Gastrocnemius medialis (tissue), 4 donors: ENCODE measurements at regions of chr6 and their contacts with region 1.

Region 1: DNA sequence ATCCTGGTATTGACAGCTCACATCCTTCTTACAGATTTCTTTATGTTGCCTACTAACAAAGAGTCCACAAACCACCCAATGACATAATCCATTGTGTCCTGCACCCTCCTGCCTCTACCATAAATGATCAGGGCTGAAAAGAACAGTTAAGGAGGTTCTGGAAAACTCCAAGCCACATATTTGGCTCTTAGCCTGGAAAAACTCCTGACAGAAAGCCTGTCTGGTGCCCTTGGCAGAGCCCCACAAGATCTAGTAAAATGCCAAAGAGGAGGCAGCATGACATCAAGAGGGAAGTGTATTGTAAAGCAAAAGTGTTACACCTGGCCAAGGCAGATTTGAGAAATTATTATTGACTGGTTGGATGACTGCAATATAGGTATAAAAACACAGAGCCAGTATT is 126.4 kb upstream of the VGLL2 start:
- DNase-seq: peak; percentile 74 to 76
- ATAC-seq: peak; percentile 65 to 73
- H3K4me3 ChIP-seq: no peak overlapping the region
- H3K27ac ChIP-seq: peak overlapping the region; percentile 88 to 94 (median 92)
- H3K4me1 ChIP-seq: peaks cover 27 to 36% of the 10 kb centered on the region in 2 donors
- H3K27me3 ChIP-seq: no peaks in the 10 kb centered on the region
- CTCF ChIP-seq: no peak
- POLR2A ChIP-seq: no peak

Region 2: GRCh38 chr6:116975600-116975999 is 163.3 kb before region 1 on chr6:
- in situ Hi-C with region 1: loop called in 1 of 4 experiments (anchors 10 kb)
- intact Hi-C with region 1: loop called (anchors 1 kb)
- DNase-seq: peak; percentile 65 to 68
- ATAC-seq: peak; percentile 86 to 94
- H3K4me3 ChIP-seq: no peak overlapping the region
- H3K27ac ChIP-seq: peak overlapping the region; percentile 78 to 91 (median 88)
- H3K4me1 ChIP-seq: peaks cover 27 to 30% of the 10 kb centered on the region in 2 donors
- H3K27me3 ChIP-seq: no peaks in the 10 kb centered on the region
- CTCF ChIP-seq: no peak
- POLR2A ChIP-seq: peak; percentile 39 to 66

Region 3: GRCh38 chr6:117008618-117009017 is 130.3 kb before region 1 on chr6:
- in situ Hi-C with region 1: no loop called
- intact Hi-C with region 1: no loop called
- DNase-seq: no peak
- ATAC-seq: no peak
- H3K4me3 ChIP-seq: no peak overlapping the region
- H3K27ac ChIP-seq: no peak overlapping the region
- H3K4me1 ChIP-seq: no peaks in the 10 kb centered on the region
- H3K27me3 ChIP-seq: no peaks in the 10 kb centered on the region
- CTCF ChIP-seq: no peak
- POLR2A ChIP-seq: no peak

Region 4: DNA sequence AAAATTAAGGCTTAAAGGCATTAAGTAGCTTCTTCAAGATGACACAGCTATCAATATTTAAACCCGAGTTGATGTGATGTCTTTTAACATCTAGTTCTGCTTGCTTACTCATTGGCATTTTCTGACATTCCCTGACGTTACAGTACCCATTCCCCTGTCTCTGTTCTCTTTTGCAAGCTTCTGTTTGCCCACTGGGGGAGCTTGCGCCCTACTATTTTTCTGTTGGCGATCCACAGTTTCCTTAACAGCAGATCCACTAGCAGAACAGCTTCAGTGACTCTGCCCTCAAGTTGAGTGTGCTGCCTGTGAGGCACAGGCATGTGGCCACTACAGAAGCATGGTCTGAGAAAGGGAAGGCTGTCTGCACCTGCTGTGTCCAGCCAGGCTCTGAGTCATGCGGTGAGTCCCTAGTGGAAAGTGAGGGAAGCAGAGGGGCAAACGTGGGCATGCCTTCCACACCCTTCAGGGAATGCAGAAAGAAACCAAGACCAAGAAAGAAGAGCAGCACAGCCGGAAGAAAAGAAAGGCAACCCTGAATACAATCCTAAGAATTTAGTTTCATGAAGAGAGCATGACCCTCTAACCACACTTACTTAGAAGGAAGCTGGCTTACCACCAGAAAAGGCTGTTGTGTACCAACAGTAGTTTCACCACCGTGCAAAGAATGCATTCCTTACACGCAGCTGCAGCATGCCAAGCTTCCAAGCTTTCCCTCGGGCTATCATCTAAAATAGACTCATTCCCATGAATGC is 28.8 kb after region 1 on chr6:
- in situ Hi-C with region 1: no loop called
- intact Hi-C with region 1: loop called (anchors 2 kb)
- DNase-seq: peak; percentile 32 to 63
- ATAC-seq: peak; percentile 80 to 94
- H3K4me3 ChIP-seq: no peak overlapping the region
- H3K27ac ChIP-seq: peak overlapping the region; percentile 25 to 76 (median 55)
- H3K4me1 ChIP-seq: peaks cover 17 to 23% of the 10 kb centered on the region in 2 donors
- H3K27me3 ChIP-seq: no peaks in the 10 kb centered on the region
- CTCF ChIP-seq: peak in 1 of 5 experiments; percentile 18
- POLR2A ChIP-seq: no peak

Region 5: GRCh38 chr6:117200067-117200466 is 61.1 kb after region 1 on chr6:
- in situ Hi-C with region 1: no loop called
- intact Hi-C with region 1: no loop called
- DNase-seq: peak; percentile 41 to 45
- ATAC-seq: peak; percentile 84 to 90
- H3K4me3 ChIP-seq: no peak overlapping the region
- H3K27ac ChIP-seq: peak overlapping the region in 3 of 4 donors; percentile 11 to 71 (median 54)
- H3K4me1 ChIP-seq: peaks cover 5 to 18% of the 10 kb centered on the region in 2 donors
- H3K27me3 ChIP-seq: no peaks in the 10 kb centered on the region
- CTCF ChIP-seq: no peak
- POLR2A ChIP-seq: no peak

Region 6: DNA sequence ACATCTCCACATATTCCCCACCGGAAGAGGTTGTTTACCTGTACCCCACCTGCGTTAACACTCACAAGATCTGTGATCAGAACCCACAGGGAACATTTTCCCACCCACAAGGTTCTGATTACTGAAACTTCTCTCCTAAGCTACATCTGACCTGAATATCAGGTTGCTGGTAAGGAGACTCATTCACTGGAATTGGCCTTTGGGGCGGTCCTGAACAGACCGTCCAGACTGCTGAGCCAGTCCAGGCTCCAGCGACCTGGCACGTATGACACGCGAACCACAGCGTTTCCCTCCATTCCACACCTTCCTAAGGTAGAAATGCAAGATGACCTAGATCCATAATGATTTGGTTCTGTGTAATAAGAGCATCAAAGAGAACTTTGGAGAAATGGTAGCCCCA is 136.3 kb after region 1 on chr6:
- in situ Hi-C with region 1: no loop called
- intact Hi-C with region 1: loop called (anchors 2 kb)
- DNase-seq: peak; percentile 66 to 78
- ATAC-seq: peak; percentile 78 to 83
- H3K4me3 ChIP-seq: peak overlapping the region in 3 of 4 donors; percentile 1 to 27 (median 17)
- H3K27ac ChIP-seq: peak overlapping the region; percentile 90 to 99 (median 97)
- H3K4me1 ChIP-seq: peaks cover 33 to 48% of the 10 kb centered on the region in 2 donors
- H3K27me3 ChIP-seq: no peaks in the 10 kb centered on the region
- CTCF ChIP-seq: no peak
- POLR2A ChIP-seq: peak; percentile 52 to 73

Region 7: DNA sequence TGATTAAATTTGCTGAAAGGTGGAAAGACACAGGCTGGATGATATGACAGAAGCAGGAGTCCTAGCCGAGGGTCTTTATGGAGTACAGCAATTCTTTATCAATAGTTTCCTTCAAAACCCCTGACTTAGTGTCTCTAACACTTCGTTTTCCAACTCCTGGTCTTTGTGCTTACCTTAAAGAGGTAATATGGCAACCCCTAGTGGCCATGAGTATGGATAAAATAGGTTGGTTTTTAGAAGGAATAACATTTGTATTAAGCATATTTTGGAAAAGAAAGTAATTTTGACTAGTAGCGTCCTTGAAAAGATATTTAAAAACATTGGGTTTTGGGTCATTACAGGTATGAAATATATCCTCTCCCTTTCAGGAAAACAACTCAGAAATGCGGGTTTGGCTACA is 178.3 kb after region 1 on chr6:
- in situ Hi-C with region 1: no loop called
- intact Hi-C with region 1: loop called (anchors 5 kb)
- DNase-seq: no peak
- ATAC-seq: peak; percentile 73 to 79
- H3K4me3 ChIP-seq: no peak overlapping the region
- H3K27ac ChIP-seq: no peak overlapping the region
- H3K4me1 ChIP-seq: peaks cover 0 to 6% of the 10 kb centered on the region in 2 donors
- H3K27me3 ChIP-seq: no peaks in the 10 kb centered on the region
- CTCF ChIP-seq: peak; percentile 54 to 70 (median 63)
- POLR2A ChIP-seq: no peak

Region 8: GRCh38 chr6:117399924-117400323 is 261.0 kb after region 1 on chr6:
- in situ Hi-C with region 1: no loop called
- intact Hi-C with region 1: loop called (anchors 10 kb)
- DNase-seq: no peak
- ATAC-seq: no peak
- H3K4me3 ChIP-seq: no peak overlapping the region
- H3K27ac ChIP-seq: no peak overlapping the region
- H3K4me1 ChIP-seq: peaks cover 3 to 11% of the 10 kb centered on the region in 2 donors
- H3K27me3 ChIP-seq: no peaks in the 10 kb centered on the region
- CTCF ChIP-seq: no peak
- POLR2A ChIP-seq: no peak

Region 9: GRCh38 chr6:117411474-117411873 is 272.6 kb after region 1 on chr6:
- in situ Hi-C with region 1: no loop called
- intact Hi-C with region 1: no loop called
- DNase-seq: no peak
- ATAC-seq: no peak
- H3K4me3 ChIP-seq: no peak overlapping the region
- H3K27ac ChIP-seq: no peak overlapping the region
- H3K4me1 ChIP-seq: no peaks in the 10 kb centered on the region
- H3K27me3 ChIP-seq: no peaks in the 10 kb centered on the region
- CTCF ChIP-seq: no peak
- POLR2A ChIP-seq: no peak

Region 10: DNA sequence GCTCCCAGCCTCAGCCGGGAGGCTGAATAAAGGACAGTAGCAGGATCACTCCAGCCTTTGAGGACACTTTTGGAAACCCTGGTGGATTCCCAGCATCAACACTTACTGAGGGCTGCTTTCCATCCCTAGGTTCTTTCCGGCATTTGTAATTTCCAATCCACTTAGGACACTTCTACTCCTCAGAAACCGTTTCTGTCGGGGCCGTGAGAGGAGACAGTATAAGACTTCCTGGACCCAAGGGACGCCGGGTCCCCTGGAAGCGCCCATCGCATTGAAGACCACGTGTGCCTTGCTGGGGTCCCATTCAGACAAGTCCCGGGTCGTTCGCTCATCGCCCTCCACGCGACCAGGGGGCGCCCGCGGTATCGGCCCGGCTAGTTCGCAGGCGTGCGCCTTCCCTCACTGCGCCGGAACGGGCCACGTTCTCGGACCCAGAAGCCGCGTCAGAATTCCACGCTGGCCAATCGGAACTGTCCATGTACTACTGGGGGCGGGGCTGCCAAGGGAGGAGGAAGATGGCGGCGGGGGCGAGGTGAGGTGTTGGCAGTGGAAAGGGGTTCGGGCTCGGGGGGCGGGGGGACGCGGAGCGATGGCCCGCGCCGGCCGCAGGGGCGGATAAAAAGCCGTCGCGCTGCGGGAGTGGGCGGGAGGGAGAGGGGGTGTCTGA is 536.2 kb after region 1 on chr6 and contains the start of gene NUS1:
- in situ Hi-C with region 1: no loop called
- intact Hi-C with region 1: loop called (anchors 10 kb)
- DNase-seq: peak; percentile 90 to 96
- ATAC-seq: peak; percentile 97 to 98
- H3K4me3 ChIP-seq: peak within 1 kb of the TSS; percentile 65 to 93 (median 76)
- H3K27ac ChIP-seq: peak within 1 kb of the TSS; percentile 84 to 90 (median 89)
- H3K4me1 ChIP-seq: peaks cover 26 to 28% of the 10 kb centered on the region in 2 donors
- H3K27me3 ChIP-seq: no peaks in the 10 kb centered on the region
- CTCF ChIP-seq: peak; percentile 31 to 80 (median 66)
- POLR2A ChIP-seq: peak; percentile 51 to 53
- total RNA-seq, gene NUS1: 7.1 to 10.5 (median 7.6) TPM